Sigmoid colon (tissue), 7 donors: ENCODE measurements at regions of chr13 and their contacts with region 1.

Region 1: DNA sequence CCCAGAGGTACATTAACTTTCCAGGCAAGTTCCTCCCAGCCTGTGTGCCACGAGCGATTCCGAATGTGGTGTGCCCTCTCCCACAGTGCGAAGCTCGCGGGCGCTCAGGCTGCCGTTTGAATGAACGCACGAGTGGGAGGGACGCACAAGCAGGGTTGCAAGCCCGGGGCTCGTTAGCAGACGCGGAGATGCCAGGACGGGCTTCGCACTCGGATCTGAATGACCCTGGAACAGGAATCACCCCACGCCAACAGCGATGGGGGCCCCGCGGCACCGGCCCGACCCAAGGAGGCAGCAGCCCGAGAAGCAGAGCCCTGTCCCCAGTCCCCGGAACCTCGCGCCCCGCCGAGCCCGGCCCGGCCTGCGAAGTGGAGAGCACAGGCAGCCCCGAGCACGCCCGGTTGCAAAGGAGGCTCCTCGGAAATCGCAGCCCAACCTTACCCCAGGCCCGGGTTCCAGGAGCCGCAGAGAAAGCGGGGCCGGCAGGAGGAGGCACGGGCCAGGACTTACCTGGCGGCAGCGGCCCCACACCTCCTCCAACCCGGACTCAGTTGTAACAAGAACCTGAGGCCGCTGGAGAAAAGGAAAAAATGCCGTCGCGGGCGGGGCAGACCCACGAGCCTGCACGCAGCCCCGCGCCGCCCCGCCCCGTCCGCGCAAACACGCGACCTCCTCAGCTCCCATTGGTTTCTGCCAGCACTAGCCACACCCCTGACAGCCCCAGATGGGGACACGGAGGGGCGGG is at the start of gene SLC25A30:
- DNase-seq: peak; percentile 98
- H3K4me3 ChIP-seq: peak within 1 kb of the TSS; percentile 45 to 78 (median 72)
- H3K27ac ChIP-seq: peak within 1 kb of the TSS; percentile 90 to 92 (median 92)
- H3K4me1 ChIP-seq: peaks cover 0 to 41% (median 29%) of the 10 kb centered on the region in 4 donors
- H3K27me3 ChIP-seq: no peaks in the 10 kb centered on the region
- CTCF ChIP-seq: no peak
- EP300 ChIP-seq: no peak
- POLR2A ChIP-seq: peak; percentile 29 to 40
- total RNA-seq, gene SLC25A30: 9.1 to 15.9 (median 10.2) TPM

Region 2: GRCh38 chr13:45370922-45371406 is 47.0 kb before region 1 on chr13:
- intact Hi-C with region 1: loop called (anchors 5 kb)
- DNase-seq: peak; percentile 85
- H3K4me3 ChIP-seq: peak overlapping the region in 2 of 4 donors; percentile 13 to 36
- H3K27ac ChIP-seq: peak overlapping the region in 2 of 4 donors; percentile 3 to 49
- H3K4me1 ChIP-seq: peaks cover 0 to 11% (median 10%) of the 10 kb centered on the region in 4 donors
- H3K27me3 ChIP-seq: no peaks in the 10 kb centered on the region
- CTCF ChIP-seq: peak; percentile 79 to 93 (median 90)
- EP300 ChIP-seq: no peak
- POLR2A ChIP-seq: no peak

Region 3: GRCh38 chr13:45464687-45465453 is 46.9 kb after region 1 on chr13 and contains the start of gene COG3:
- intact Hi-C with region 1: loop called (anchors 1 kb)
- DNase-seq: peak; percentile 97
- H3K4me3 ChIP-seq: peak within 1 kb of the TSS; percentile 81 to 99 (median 90)
- H3K27ac ChIP-seq: peak within 1 kb of the TSS; percentile 90 to 96 (median 94)
- H3K4me1 ChIP-seq: peaks cover 0 to 36% (median 28%) of the 10 kb centered on the region in 4 donors
- H3K27me3 ChIP-seq: no peaks in the 10 kb centered on the region
- CTCF ChIP-seq: peak in 2 of 4 experiments; percentile 24 to 32
- EP300 ChIP-seq: peak in 1 of 4 donors; percentile 51
- POLR2A ChIP-seq: peak; percentile 74 to 82
- total RNA-seq, gene COG3: 24.9 to 30.0 (median 27.2) TPM